ENCODE measurements at regions of chr2 and their contacts with region 1.

Region 1: DNA sequence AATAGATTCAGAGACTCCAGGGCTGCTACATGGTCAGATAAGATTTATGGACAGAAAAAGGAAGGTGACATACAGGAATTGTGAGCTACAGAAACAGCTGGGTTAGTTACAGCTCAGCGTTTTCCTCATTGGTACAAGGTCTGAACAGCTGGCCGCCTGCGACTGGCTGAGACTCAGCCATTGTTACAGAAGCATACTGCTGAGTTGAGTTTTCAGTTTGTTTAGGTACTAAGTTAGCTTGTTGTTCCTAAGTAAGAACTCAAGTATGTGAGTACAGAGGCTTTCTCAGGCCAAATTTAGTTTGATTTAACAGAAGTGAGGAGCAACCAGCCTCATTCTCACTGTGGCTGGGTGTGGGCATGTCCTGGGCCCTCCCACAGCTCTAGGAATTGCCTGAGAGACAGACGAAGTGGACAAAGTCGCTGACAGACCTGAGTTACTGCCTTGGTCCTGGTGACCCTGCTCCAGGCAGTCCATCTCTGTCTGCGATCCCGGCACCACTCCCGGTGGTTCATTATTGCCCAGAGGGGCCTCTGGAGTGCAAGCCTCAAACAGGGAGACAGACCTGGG is 27.8 kb upstream of the RHOB start:
- DNase-seq: peak in 2 of 3 donors; percentile 31 to 46
- H3K4me3 ChIP-seq: no peak overlapping the region
- H3K27ac ChIP-seq: no peak overlapping the region
- H3K4me1 ChIP-seq: peaks cover 5 to 44% (median 29%) of the 10 kb centered on the region in 4 experiments
- H3K27me3 ChIP-seq: no peaks in the 10 kb centered on the region

Region 2: GRCh38 chr2:20404950-20405349 is 14.1 kb before region 1 on chr2:
- CTCF ChIA-PET with region 1: interaction called, 117 read pairs
- POLR2A ChIA-PET with region 1: no interaction called
- DNase-seq: no peak
- H3K4me3 ChIP-seq: no peak overlapping the region
- H3K27ac ChIP-seq: no peak overlapping the region
- H3K4me1 ChIP-seq: no peaks in the 10 kb centered on the region
- H3K27me3 ChIP-seq: no peaks in the 10 kb centered on the region